Sigmoid colon (tissue), 7 donors: ENCODE measurements at regions of chr10 and their contacts with region 1.

Region 1: GRCh38 chr10:12129222-12130111 is at the start of gene SEC61A2:
- DNase-seq: peak; percentile 97
- H3K4me3 ChIP-seq: peak within 1 kb of the TSS; percentile 61 to 100 (median 94)
- H3K27ac ChIP-seq: peak within 1 kb of the TSS; percentile 93 to 96 (median 96)
- H3K4me1 ChIP-seq: peaks cover 0 to 15% (median 10%) of the 10 kb centered on the region in 4 donors
- H3K27me3 ChIP-seq: no peaks in the 10 kb centered on the region
- CTCF ChIP-seq: no peak
- EP300 ChIP-seq: no peak
- POLR2A ChIP-seq: peak; percentile 22 to 32
- total RNA-seq, gene SEC61A2: 7.5 to 11.1 (median 9.1) TPM

Region 2: GRCh38 chr10:11853468-11853867 is 276.0 kb before region 1 on chr10:
- intact Hi-C with region 1: no loop called
- DNase-seq: peak; percentile 6
- H3K4me3 ChIP-seq: no peak overlapping the region
- H3K27ac ChIP-seq: no peak overlapping the region
- H3K4me1 ChIP-seq: no peaks in the 10 kb centered on the region
- H3K27me3 ChIP-seq: no peaks in the 10 kb centered on the region
- CTCF ChIP-seq: no peak
- EP300 ChIP-seq: no peak
- POLR2A ChIP-seq: no peak

Region 3: GRCh38 chr10:11986593-11987216 is 142.8 kb before region 1 on chr10:
- intact Hi-C with region 1: loop called (anchors 10 kb)
- DNase-seq: peak; percentile 71
- H3K4me3 ChIP-seq: no peak overlapping the region
- H3K27ac ChIP-seq: no peak overlapping the region
- H3K4me1 ChIP-seq: peaks cover 0 to 6% (median 3%) of the 10 kb centered on the region in 4 donors
- H3K27me3 ChIP-seq: no peaks in the 10 kb centered on the region
- CTCF ChIP-seq: peak; percentile 44 to 78 (median 73)
- EP300 ChIP-seq: no peak
- POLR2A ChIP-seq: no peak

Region 4: GRCh38 chr10:12068449-12069269 is 60.8 kb before region 1 on chr10 and contains the start of gene DHTKD1:
- intact Hi-C with region 1: loop called (anchors 2 kb)
- DNase-seq: peak; percentile 99
- H3K4me3 ChIP-seq: peak within 1 kb of the TSS; percentile 78 to 96 (median 94)
- H3K27ac ChIP-seq: peak within 1 kb of the TSS; percentile 80 to 87 (median 84)
- H3K4me1 ChIP-seq: peaks cover 0 to 17% (median 9%) of the 10 kb centered on the region in 4 donors
- H3K27me3 ChIP-seq: no peaks in the 10 kb centered on the region
- CTCF ChIP-seq: peak in 3 of 4 experiments; percentile 51 to 72 (median 72)
- EP300 ChIP-seq: peak in 2 of 4 donors; percentile 7 to 45
- POLR2A ChIP-seq: peak; percentile 52 to 60
- total RNA-seq, gene DHTKD1: 14.7 to 37.3 (median 20.7) TPM

Region 5: GRCh38 chr10:12091421-12091820 is 38.0 kb before region 1 on chr10:
- intact Hi-C with region 1: no loop called
- DNase-seq: no peak
- H3K4me3 ChIP-seq: no peak overlapping the region
- H3K27ac ChIP-seq: no peak overlapping the region
- H3K4me1 ChIP-seq: no peaks in the 10 kb centered on the region
- H3K27me3 ChIP-seq: no peaks in the 10 kb centered on the region
- CTCF ChIP-seq: no peak
- EP300 ChIP-seq: no peak
- POLR2A ChIP-seq: no peak

Region 6: GRCh38 chr10:12195603-12196506 is 66.4 kb after region 1 on chr10 and contains the starts of genes CDC123 and NUDT5:
- intact Hi-C with region 1: loop called (anchors 2 kb)
- DNase-seq: peak; percentile 93
- H3K4me3 ChIP-seq: peak within 1 kb of the TSS; percentile 62 to 95 (median 82)
- H3K27ac ChIP-seq: peak within 1 kb of the TSS; percentile 86 to 93 (median 88)
- H3K4me1 ChIP-seq: peaks cover 0 to 43% (median 37%) of the 10 kb centered on the region in 4 donors
- H3K27me3 ChIP-seq: no peaks in the 10 kb centered on the region
- CTCF ChIP-seq: no peak
- EP300 ChIP-seq: no peak
- POLR2A ChIP-seq: no peak
- total RNA-seq, gene CDC123: 33.8 to 61.7 (median 48.5) TPM
- total RNA-seq, gene NUDT5: 20.0 to 31.6 (median 24.0) TPM